Right ventricle myocardium superior (tissue), 1 donor: ENCODE measurements at regions of chr13 and their contacts with region 1.

Region 1: GRCh38 chr13:98570929-98571372 is 6.0 kb downstream of the STK24 start:
- DNase-seq: no peak
- ATAC-seq: peak; percentile 29

Region 2: DNA sequence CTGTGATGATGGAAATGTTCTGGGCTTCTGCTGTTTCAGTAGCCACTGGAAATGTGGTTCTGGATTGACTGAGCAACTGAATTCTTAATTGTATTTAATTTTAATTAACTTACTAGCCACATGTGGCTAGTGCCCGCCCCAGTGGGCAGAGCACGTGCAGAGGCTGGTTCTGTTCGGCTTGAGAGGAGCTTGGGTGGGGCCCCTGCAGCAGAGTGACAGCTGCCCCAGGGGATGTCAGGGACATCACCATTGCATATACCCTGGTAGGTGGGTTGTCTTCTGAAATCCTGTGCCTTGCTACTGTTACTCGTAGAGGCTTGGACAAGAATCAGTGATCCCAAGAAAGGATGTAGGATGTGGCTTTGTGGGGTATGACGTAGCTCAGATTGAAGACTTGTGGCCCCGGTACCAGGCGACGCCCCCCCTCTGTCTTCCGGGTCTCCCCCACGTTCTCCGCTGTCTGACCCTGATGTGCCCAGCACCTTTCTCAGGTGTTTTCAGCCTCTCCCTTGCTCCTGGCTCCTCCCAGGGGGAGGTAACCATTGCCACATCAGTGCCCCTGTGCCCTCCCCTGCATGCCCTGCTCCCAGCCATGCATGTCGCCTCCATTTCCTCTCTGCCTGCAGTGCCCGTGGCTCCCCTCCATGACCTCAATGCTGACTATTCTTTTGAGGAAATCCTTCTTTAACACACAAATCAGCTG is 291.3 kb before region 1 on chr13:
- intact Hi-C with region 1: no loop called
- DNase-seq: no peak
- ATAC-seq: no peak

Region 3: GRCh38 chr13:98495627-98496478 is 75.1 kb before region 1 on chr13:
- intact Hi-C with region 1: loop called (anchors 5 kb)
- DNase-seq: no peak
- ATAC-seq: peak; percentile 54